Caco-2 (cell line): ENCODE measurements at regions of chr2 and their contacts with region 1.

Region 1: GRCh38 chr2:105812180-105813044 is 67.7 kb downstream of the NCK2 start:
- DNase-seq: peak; percentile 67 to 69
- H3K4me3 ChIP-seq: no peak overlapping the region
- H3K4me3 Mint-ChIP-seq: peak overlapping the region; percentile 10
- H3K27ac Mint-ChIP-seq: peak overlapping the region; percentile 78
- H3K4me1 ChIP-seq: peaks cover 54% of the 10 kb centered on the region
- H3K4me1 Mint-ChIP-seq: peaks cover 28% of the 10 kb centered on the region
- H3K27me3 ChIP-seq: no peaks in the 10 kb centered on the region
- H3K27me3 Mint-ChIP-seq: no peaks in the 10 kb centered on the region
- CTCF ChIP-seq: no peak

Region 2: GRCh38 chr2:105576440-105577252 is 235.8 kb before region 1 on chr2:
- CTCF ChIA-PET with region 1: interaction called, 6 read pairs
- POLR2A ChIA-PET with region 1: no interaction called
- intact Hi-C with region 1: loop called (anchors 2 kb)
- DNase-seq: peak in 1 of 2 experiments; percentile 45
- H3K4me3 ChIP-seq: no peak overlapping the region
- H3K4me3 Mint-ChIP-seq: peak overlapping the region; percentile 30
- H3K27ac Mint-ChIP-seq: peak overlapping the region; percentile 90
- H3K4me1 ChIP-seq: peaks cover 30% of the 10 kb centered on the region
- H3K4me1 Mint-ChIP-seq: peaks cover 36% of the 10 kb centered on the region
- H3K27me3 ChIP-seq: no peaks in the 10 kb centered on the region
- H3K27me3 Mint-ChIP-seq: no peaks in the 10 kb centered on the region
- CTCF ChIP-seq: peak; percentile 54 to 71

Region 3: DNA sequence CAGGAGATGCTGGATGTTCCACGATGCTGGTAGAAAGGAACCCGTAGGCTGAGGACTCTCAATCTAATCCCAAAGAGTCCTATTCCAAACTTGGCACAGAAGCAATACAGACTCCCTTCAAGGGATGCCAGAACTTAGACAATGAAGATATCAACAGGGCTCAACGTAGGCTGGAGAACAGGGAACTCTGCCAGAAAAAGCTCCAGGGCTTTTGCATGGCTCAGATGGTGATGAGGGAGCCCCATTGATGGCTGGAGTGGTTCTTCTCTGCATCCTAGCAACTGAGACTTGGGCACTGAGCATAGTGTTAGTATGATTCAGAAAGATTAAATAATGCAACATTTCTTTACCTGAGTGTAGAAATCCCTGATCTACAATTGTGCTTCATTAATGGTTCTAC is 184.9 kb before region 1 on chr2:
- CTCF ChIA-PET with region 1: no interaction called
- POLR2A ChIA-PET with region 1: no interaction called
- intact Hi-C with region 1: no loop called
- DNase-seq: no peak
- H3K4me3 ChIP-seq: no peak overlapping the region
- H3K4me3 Mint-ChIP-seq: no peak overlapping the region
- H3K27ac Mint-ChIP-seq: no peak overlapping the region
- H3K4me1 ChIP-seq: no peaks in the 10 kb centered on the region
- H3K4me1 Mint-ChIP-seq: no peaks in the 10 kb centered on the region
- H3K27me3 ChIP-seq: no peaks in the 10 kb centered on the region
- H3K27me3 Mint-ChIP-seq: peaks cover 7% of the 10 kb centered on the region
- CTCF ChIP-seq: no peak

Region 4: DNA sequence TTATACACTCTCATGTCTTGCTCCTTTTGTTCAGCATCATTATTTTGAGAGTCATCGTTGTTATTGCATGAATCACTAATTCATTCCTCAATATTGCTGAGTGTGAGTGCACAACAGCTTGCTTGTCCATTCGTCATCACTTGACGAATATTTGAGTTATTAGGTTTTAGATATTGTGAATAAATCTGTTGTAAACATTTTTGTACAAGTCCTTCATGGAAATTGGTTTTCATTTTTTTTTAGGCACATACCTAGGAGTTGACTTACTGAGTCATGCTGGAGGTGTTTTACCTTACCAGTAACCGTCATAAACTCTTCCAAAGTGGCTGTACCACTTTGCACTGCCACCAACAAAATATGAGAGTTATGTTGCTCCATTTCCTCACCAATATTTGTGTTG is 151.9 kb before region 1 on chr2:
- CTCF ChIA-PET with region 1: no interaction called
- POLR2A ChIA-PET with region 1: no interaction called
- intact Hi-C with region 1: no loop called
- DNase-seq: no peak
- H3K4me3 ChIP-seq: no peak overlapping the region
- H3K4me3 Mint-ChIP-seq: no peak overlapping the region
- H3K27ac Mint-ChIP-seq: no peak overlapping the region
- H3K4me1 ChIP-seq: no peaks in the 10 kb centered on the region
- H3K4me1 Mint-ChIP-seq: no peaks in the 10 kb centered on the region
- H3K27me3 ChIP-seq: no peaks in the 10 kb centered on the region
- H3K27me3 Mint-ChIP-seq: no peaks in the 10 kb centered on the region
- CTCF ChIP-seq: no peak

Region 5: GRCh38 chr2:105769504-105769903 is 42.9 kb before region 1 on chr2:
- CTCF ChIA-PET with region 1: no interaction called
- POLR2A ChIA-PET with region 1: no interaction called
- intact Hi-C with region 1: loop called (anchors 5 kb)
- DNase-seq: peak in 1 of 2 experiments; percentile 52
- H3K4me3 ChIP-seq: no peak overlapping the region
- H3K4me3 Mint-ChIP-seq: no peak overlapping the region
- H3K27ac Mint-ChIP-seq: peak overlapping the region; percentile 75
- H3K4me1 ChIP-seq: peaks cover 9% of the 10 kb centered on the region
- H3K4me1 Mint-ChIP-seq: peaks cover 28% of the 10 kb centered on the region
- H3K27me3 ChIP-seq: no peaks in the 10 kb centered on the region
- H3K27me3 Mint-ChIP-seq: no peaks in the 10 kb centered on the region
- CTCF ChIP-seq: peak; percentile 32 to 46

Region 6: GRCh38 chr2:105853356-105854132 is 41.1 kb after region 1 on chr2:
- CTCF ChIA-PET with region 1: no interaction called
- POLR2A ChIA-PET with region 1: no interaction called
- intact Hi-C with region 1: loop called (anchors 2 kb)
- DNase-seq: peak; percentile 84
- H3K4me3 ChIP-seq: no peak overlapping the region
- H3K4me3 Mint-ChIP-seq: peak overlapping the region; percentile 46
- H3K27ac Mint-ChIP-seq: peak overlapping the region; percentile 60
- H3K4me1 ChIP-seq: peaks cover 37% of the 10 kb centered on the region
- H3K4me1 Mint-ChIP-seq: peaks cover 40% of the 10 kb centered on the region
- H3K27me3 ChIP-seq: no peaks in the 10 kb centered on the region
- H3K27me3 Mint-ChIP-seq: no peaks in the 10 kb centered on the region
- CTCF ChIP-seq: no peak

Region 7: GRCh38 chr2:106004851-106005250 is 192.4 kb after region 1 on chr2:
- CTCF ChIA-PET with region 1: no interaction called
- POLR2A ChIA-PET with region 1: no interaction called
- intact Hi-C with region 1: no loop called
- DNase-seq: no peak
- H3K4me3 ChIP-seq: no peak overlapping the region
- H3K4me3 Mint-ChIP-seq: no peak overlapping the region
- H3K27ac Mint-ChIP-seq: no peak overlapping the region
- H3K4me1 ChIP-seq: no peaks in the 10 kb centered on the region
- H3K4me1 Mint-ChIP-seq: no peaks in the 10 kb centered on the region
- H3K27me3 ChIP-seq: no peaks in the 10 kb centered on the region
- H3K27me3 Mint-ChIP-seq: peaks cover 4% of the 10 kb centered on the region
- CTCF ChIP-seq: no peak